Adrenal gland (tissue), 19 donors: ENCODE measurements at regions of chr21 and their contacts with region 1.

Region 1: GRCh38 chr21:36747815-36748383 is 49.0 kb downstream of the SIM2 start:
- DNase-seq: peak; percentile 29 to 69 (median 49)
- H3K4me3 ChIP-seq: peak overlapping the region in 2 of 4 donors; percentile 32 to 68
- H3K27ac ChIP-seq: no peak overlapping the region
- H3K4me1 ChIP-seq: peaks cover 0 to 3% of the 10 kb centered on the region in 2 donors
- H3K27me3 ChIP-seq: peaks cover 5% of the 10 kb centered on the region
- CTCF ChIP-seq: peak in 1 of 6 experiments; percentile 59
- POLR2A ChIP-seq: no peak

Region 2: DNA sequence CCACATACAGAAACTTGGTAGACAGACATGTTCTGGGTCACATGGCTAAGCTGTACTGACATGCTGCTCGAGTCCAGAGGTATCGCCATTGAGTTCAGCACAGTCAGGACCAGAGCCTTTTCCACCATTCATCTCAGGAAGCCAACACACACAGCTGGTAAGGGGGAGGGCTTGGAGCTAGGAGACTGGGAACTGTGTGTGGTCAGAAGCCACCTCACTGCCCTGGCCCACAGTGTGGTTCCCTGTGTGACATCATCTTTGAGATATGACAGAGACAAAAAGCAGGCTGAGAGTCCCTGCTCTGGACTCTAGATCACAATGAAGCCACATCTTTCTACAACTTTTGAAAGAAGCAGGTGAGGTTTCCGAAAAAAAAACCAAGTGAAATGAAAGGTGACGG is 58.2 kb after region 1 on chr21:
- intact Hi-C with region 1: no loop called
- DNase-seq: no peak
- H3K4me3 ChIP-seq: no peak overlapping the region
- H3K27ac ChIP-seq: no peak overlapping the region
- H3K4me1 ChIP-seq: no peaks in the 10 kb centered on the region
- H3K27me3 ChIP-seq: no peaks in the 10 kb centered on the region
- CTCF ChIP-seq: no peak
- POLR2A ChIP-seq: no peak

Region 3: DNA sequence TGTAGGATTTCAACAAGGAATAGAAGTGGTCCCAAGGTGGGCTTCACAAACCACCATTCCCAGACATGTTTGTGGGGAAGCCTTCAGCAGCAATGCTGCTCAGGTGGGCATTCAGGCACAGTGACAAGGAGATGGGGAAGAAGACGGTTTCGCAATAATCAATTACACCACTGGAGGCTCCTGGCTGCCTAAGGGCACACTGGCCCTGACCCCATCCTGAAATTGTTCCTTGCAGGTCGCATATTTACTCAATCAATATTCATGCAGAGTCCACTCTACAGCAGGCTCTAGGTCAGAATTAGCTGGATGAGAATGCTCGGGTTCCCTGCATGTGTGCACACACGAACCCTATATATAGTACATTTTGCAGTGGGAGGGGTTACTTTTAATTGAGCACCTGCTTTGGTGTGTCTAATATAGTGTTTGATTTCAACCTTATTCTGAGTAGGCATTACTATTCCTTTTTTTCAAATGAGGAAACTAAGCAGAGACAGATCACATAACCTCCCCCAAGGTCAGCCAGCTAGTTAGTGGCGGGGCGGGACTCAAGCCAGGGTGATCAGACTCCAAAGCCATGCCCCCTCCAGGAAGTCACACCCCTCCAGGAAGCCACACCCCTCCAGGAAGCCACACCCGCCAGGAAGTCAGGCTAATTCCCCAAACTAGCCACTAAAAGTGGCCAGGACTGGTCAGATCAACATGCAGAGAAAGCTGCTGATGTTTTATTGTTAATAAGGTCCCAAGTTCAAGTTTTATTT is 112.0 kb after region 1 on chr21:
- intact Hi-C with region 1: loop called in 1 of 2 experiments (anchors 5 kb)
- DNase-seq: peak; percentile 70 to 90 (median 84)
- H3K4me3 ChIP-seq: no peak overlapping the region
- H3K27ac ChIP-seq: no peak overlapping the region
- H3K4me1 ChIP-seq: peaks cover 9 to 12% of the 10 kb centered on the region in 2 donors
- H3K27me3 ChIP-seq: no peaks in the 10 kb centered on the region
- CTCF ChIP-seq: no peak
- POLR2A ChIP-seq: peak in 1 of 2 donors; percentile 26

Region 4: DNA sequence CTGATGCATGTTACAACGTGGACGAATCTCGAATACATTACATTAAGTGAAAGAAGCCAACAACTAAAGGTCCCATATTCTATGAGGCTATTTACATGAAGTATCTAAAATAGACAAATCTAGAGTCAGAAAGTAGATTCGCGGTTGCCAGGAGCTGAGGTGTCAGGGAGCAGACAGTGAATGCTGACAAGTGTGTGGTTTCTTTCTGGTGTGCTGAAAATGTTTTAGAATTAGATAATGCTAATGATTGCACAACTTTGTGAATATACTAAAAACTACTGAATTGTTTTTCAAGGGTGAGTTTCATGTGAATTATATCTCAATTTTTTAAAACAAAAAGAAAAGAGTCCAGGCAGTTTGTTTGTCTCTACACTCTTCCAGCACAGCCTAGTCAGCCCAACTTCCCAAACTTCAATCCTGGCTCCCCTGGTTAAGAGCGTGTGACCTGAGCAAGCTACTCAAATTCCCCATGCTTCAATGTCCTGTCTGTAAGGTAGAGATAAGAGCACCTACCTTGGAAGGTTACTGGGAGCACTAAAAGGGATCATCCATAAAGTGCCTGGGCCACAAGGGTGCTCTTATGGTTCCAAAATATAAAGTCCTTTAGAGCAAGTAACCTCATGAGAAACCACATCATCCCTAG is 197.7 kb after region 1 on chr21:
- intact Hi-C with region 1: no loop called
- DNase-seq: peak in 1 of 7 donors; percentile 13
- H3K4me3 ChIP-seq: no peak overlapping the region
- H3K27ac ChIP-seq: no peak overlapping the region
- H3K4me1 ChIP-seq: no peaks in the 10 kb centered on the region
- H3K27me3 ChIP-seq: no peaks in the 10 kb centered on the region
- CTCF ChIP-seq: no peak
- POLR2A ChIP-seq: no peak